Lower leg skin (tissue), 4 donors: ENCODE measurements at regions of chr10 and their contacts with region 1.

Region 1: GRCh38 chr10:90862908-90863514 is 5.2 kb upstream of the HTR7 start:
- DNase-seq: no peak
- H3K4me3 ChIP-seq: no peak overlapping the region
- CTCF ChIP-seq: no peak
- POLR2A ChIP-seq: no peak

Region 2: DNA sequence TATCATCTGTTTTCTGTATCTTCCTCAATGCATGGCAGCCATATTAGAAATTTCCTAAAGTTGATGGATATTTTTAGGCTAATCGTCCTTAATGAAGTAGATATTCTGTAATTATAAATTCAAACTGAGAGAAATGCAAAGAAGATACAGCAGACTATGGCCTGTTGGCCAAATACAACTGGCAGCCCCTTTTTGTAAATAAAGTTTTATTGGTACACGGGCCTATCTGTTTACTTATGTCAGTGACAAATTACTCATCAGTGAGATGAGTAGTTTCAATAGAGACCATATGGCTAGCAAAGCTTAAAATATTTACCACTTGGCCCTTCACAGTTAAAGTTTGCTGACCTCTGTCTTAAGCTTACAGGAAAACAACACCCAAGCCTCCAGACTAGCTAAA is 117.4 kb before region 1 on chr10:
- intact Hi-C with region 1: loop called (anchors 5 kb)
- DNase-seq: no peak
- H3K4me3 ChIP-seq: no peak overlapping the region
- CTCF ChIP-seq: no peak
- POLR2A ChIP-seq: no peak

Region 3: GRCh38 chr10:91378061-91378460 is 515.0 kb after region 1 on chr10:
- intact Hi-C with region 1: no loop called
- DNase-seq: no peak
- H3K4me3 ChIP-seq: no peak overlapping the region
- CTCF ChIP-seq: no peak
- POLR2A ChIP-seq: no peak